Endothelial cell of umbilical vein (primary cell): ENCODE measurements at regions of chr5 and their contacts with region 1.

Region 1: GRCh38 chr5:133247881-133248624 is 196.2 kb downstream of the HSPA4 start:
- DNase-seq: peak; percentile 87
- H3K4me3 ChIP-seq: no peak overlapping the region
- H3K27ac ChIP-seq: no peak overlapping the region
- H3K4me1 ChIP-seq: peaks cover 3% of the 10 kb centered on the region
- H3K27me3 ChIP-seq: no peaks in the 10 kb centered on the region
- CTCF ChIP-seq: peak; percentile 83 to 98
- POLR2A ChIP-seq: no peak

Region 2: DNA sequence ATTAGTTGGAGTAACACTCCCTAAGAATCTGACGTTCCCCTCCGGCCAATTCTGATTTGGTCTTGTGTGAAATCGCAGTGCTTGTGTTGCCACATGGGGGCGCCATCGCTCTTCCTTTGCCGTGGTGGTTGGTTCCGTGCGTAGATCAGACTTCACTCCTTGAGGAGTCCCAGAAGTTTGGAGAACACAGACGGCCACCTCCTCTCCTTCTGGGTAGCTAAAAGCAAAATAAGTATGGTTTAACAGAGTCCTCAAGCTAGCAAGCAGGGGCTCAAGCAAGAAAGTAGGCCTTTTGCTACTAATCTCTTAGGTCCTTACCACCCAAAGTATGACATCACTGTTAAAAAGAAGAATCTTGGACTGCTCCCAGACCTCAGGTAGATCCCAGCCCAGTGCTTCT is 136.8 kb before region 1 on chr5:
- CTCF ChIA-PET with region 1: interaction called, 303 read pairs
- POLR2A ChIA-PET with region 1: no interaction called
- dilution Hi-C with region 1: no loop called
- intact Hi-C with region 1: loop called (anchors 1 kb)
- DNase-seq: peak; percentile 83
- H3K4me3 ChIP-seq: no peak overlapping the region
- H3K27ac ChIP-seq: no peak overlapping the region
- H3K4me1 ChIP-seq: no peaks in the 10 kb centered on the region
- H3K27me3 ChIP-seq: no peaks in the 10 kb centered on the region
- CTCF ChIP-seq: peak; percentile 83 to 84
- POLR2A ChIP-seq: no peak

Region 3: GRCh38 chr5:133130387-133131118 is 117.5 kb before region 1 on chr5:
- CTCF ChIA-PET with region 1: interaction called, 28 read pairs
- POLR2A ChIA-PET with region 1: no interaction called
- dilution Hi-C with region 1: no loop called
- intact Hi-C with region 1: no loop called
- DNase-seq: peak; percentile 14
- H3K4me3 ChIP-seq: no peak overlapping the region
- H3K27ac ChIP-seq: no peak overlapping the region
- H3K4me1 ChIP-seq: peaks cover 5% of the 10 kb centered on the region
- H3K27me3 ChIP-seq: peaks cover 0 to 4% of the 10 kb centered on the region in 2 experiments
- CTCF ChIP-seq: no peak
- POLR2A ChIP-seq: no peak

Region 4: GRCh38 chr5:133205204-133205603 is 42.8 kb before region 1 on chr5:
- CTCF ChIA-PET with region 1: interaction called, 18 read pairs
- POLR2A ChIA-PET with region 1: no interaction called
- dilution Hi-C with region 1: no loop called
- intact Hi-C with region 1: loop called (anchors 5 kb)
- DNase-seq: no peak
- H3K4me3 ChIP-seq: no peak overlapping the region
- H3K27ac ChIP-seq: no peak overlapping the region
- H3K4me1 ChIP-seq: no peaks in the 10 kb centered on the region
- H3K27me3 ChIP-seq: peaks cover 2 to 4% of the 10 kb centered on the region in 2 experiments
- CTCF ChIP-seq: no peak
- POLR2A ChIP-seq: no peak

Region 5: DNA sequence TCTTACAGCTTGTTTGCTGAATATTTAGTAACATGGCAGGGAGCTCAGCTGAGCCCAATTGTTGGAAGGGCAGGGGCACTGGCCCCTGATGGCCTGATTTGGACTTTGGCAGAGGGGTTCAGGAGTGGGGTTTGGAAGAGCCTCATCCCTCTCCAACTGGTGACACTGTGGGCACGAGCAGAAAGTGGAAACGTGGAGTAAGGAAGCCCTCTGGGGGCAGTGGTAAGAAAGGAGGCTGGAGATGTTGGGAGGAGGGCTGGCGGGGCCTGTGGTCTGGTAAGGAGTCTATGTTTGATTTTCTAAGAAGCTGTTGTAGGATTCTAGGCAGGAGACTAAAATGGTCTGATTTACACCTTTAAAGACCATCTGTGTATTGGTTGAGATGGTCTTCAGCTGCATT is 12.7 kb after region 1 on chr5:
- CTCF ChIA-PET with region 1: interaction called, 20 read pairs
- POLR2A ChIA-PET with region 1: no interaction called
- dilution Hi-C with region 1: no loop called
- intact Hi-C with region 1: no loop called
- DNase-seq: no peak
- H3K4me3 ChIP-seq: no peak overlapping the region
- H3K27ac ChIP-seq: no peak overlapping the region
- H3K4me1 ChIP-seq: no peaks in the 10 kb centered on the region
- H3K27me3 ChIP-seq: peaks cover 2 to 11% of the 10 kb centered on the region in 2 experiments
- CTCF ChIP-seq: peak in 1 of 2 donors; percentile 8
- POLR2A ChIP-seq: no peak

Region 6: GRCh38 chr5:133287500-133287899 is 39.4 kb after region 1 on chr5:
- CTCF ChIA-PET with region 1: interaction called, 55 read pairs
- POLR2A ChIA-PET with region 1: no interaction called
- dilution Hi-C with region 1: no loop called
- intact Hi-C with region 1: loop called (anchors 1 kb)
- DNase-seq: peak; percentile 52
- H3K4me3 ChIP-seq: no peak overlapping the region
- H3K27ac ChIP-seq: no peak overlapping the region
- H3K4me1 ChIP-seq: no peaks in the 10 kb centered on the region
- H3K27me3 ChIP-seq: no peaks in the 10 kb centered on the region
- CTCF ChIP-seq: peak; percentile 47 to 77
- POLR2A ChIP-seq: no peak

Region 7: DNA sequence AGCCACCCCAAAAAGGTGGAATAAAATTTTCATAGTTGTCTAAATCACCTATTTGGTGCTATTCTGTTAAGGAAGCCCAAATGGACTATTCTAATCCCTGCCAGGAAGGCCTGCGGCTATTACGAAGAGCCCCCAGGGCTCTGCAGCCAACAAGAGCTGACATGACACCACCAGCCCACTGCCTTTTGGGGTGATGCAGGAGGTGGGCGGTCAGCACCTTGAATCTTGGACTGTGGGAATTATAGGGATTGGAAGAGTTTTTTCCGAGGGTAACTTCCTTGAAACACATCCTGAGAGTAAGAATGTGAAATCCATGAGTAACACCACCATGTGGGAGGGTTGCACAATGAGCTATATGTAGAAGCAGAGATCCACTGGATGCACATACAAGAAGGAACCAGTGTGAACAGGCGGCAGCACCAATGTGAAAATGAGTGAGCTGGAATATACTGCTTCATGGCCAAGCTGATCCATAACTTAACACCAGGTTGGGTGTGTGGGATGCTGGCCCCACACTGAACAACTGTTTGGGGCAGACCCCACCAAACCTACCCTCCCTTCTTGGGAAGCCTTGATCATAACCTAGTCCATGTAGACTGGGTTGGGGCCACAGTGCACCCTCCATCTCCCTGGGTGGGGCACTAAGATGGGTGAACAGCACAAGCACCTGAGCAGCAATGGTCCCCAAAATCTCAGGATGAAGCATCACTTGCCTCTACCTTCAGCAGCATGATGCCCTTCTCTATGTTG is 125.2 kb after region 1 on chr5:
- CTCF ChIA-PET with region 1: no interaction called
- POLR2A ChIA-PET with region 1: no interaction called
- dilution Hi-C with region 1: no loop called
- intact Hi-C with region 1: no loop called
- DNase-seq: no peak
- H3K4me3 ChIP-seq: no peak overlapping the region
- H3K27ac ChIP-seq: no peak overlapping the region
- H3K4me1 ChIP-seq: no peaks in the 10 kb centered on the region
- H3K27me3 ChIP-seq: no peaks in the 10 kb centered on the region
- CTCF ChIP-seq: no peak
- POLR2A ChIP-seq: no peak